WTC11 (cell line): ENCODE measurements at regions of chr16 and their contacts with region 1.

Region 1: DNA sequence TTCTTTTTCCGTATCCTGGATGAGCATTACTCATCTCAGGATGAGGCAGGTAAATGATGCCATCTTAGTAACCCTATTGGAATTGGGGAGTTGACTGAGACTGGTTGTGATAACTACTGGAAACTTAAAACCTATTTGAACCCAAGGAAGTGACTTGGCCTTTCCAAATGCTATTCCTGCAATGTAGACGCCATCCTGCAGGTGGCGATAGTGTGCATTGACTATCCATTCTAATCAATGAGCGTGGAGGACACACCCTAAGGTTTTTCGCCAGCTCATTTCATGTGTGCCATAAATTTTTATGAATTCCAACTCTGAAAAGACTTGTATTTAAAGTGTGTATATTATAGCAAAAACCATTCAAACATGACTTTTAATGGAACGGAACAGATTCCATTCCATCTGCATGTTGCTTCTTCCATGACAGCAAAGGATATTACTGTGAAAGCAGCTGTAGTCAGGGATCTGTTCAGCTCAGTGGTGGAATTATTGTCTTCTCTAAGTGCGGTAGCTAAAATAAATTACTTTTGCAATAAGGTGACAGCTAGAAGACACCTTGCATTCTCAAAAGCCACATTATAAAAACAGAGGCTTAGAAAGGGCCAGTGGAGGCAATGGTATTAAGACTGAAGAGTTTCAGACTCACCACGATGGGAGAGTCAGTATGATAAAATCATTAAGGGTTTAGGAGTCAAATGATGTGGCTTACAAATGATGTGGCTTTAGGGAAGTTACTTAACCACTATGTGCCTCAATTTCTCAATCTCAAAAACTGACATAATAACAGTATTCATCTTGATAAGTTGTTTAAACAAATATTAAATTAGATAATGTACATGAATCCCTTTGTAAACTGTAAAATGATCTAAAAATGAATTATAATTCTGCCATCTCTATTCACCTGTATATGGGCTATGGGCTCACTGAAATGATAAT is 55.5 kb downstream of the SYT17 start:
- DNase-seq: peak; percentile 86
- ATAC-seq: peak; percentile 65
- H3K4me3 Mint-ChIP-seq: no peak overlapping the region
- H3K27ac Mint-ChIP-seq: no peak overlapping the region
- H3K4me1 Mint-ChIP-seq: peaks cover 9% of the 10 kb centered on the region
- H3K27me3 Mint-ChIP-seq: no peaks in the 10 kb centered on the region; the same call in 1 of the 2 replicates
- CTCF ChIP-seq: peak; percentile 75

Region 2: GRCh38 chr16:18932243-18932981 is 291.1 kb before region 1 on chr16:
- CTCF ChIA-PET with region 1: no interaction called
- POLR2A ChIA-PET with region 1: no interaction called
- DNase-seq: no peak
- ATAC-seq: no peak
- H3K4me3 Mint-ChIP-seq: no peak overlapping the region
- H3K27ac Mint-ChIP-seq: no peak overlapping the region
- H3K4me1 Mint-ChIP-seq: peaks cover 19% of the 10 kb centered on the region; the same call in 1 of the 2 replicates
- H3K27me3 Mint-ChIP-seq: no peaks in the 10 kb centered on the region; the same call in 1 of the 2 replicates
- CTCF ChIP-seq: no peak

Region 3: DNA sequence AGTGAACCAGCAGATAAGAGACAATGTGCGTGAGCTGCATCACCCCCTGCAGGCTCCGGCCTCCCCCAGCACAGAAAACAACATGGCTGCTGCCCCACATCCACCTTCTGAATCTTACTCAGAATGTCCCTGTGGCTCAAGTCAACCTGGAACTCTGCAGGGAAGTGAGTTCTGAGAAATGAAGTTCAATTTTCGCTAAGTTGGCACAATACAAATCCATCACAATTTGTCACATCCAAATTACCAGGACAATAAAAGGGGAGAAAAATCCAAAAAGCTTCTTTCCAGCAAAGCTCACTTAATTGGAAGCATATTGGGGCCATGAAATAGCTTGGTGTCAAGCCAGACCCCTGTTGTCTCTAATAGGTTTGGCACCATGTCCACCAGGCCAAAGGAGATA is 100.1 kb after region 1 on chr16:
- CTCF ChIA-PET with region 1: no interaction called
- POLR2A ChIA-PET with region 1: no interaction called
- DNase-seq: no peak
- ATAC-seq: no peak
- H3K4me3 Mint-ChIP-seq: no peak overlapping the region
- H3K27ac Mint-ChIP-seq: no peak overlapping the region
- H3K4me1 Mint-ChIP-seq: peaks cover 3% of the 10 kb centered on the region
- H3K27me3 Mint-ChIP-seq: no peaks in the 10 kb centered on the region
- CTCF ChIP-seq: no peak

Region 4: GRCh38 chr16:19375561-19376158 is 152.2 kb after region 1 on chr16:
- CTCF ChIA-PET with region 1: interaction called, 13 read pairs
- POLR2A ChIA-PET with region 1: no interaction called
- DNase-seq: peak; percentile 59
- ATAC-seq: peak; percentile 61
- H3K4me3 Mint-ChIP-seq: no peak overlapping the region
- H3K27ac Mint-ChIP-seq: no peak overlapping the region
- H3K4me1 Mint-ChIP-seq: no peaks in the 10 kb centered on the region
- H3K27me3 Mint-ChIP-seq: no peaks in the 10 kb centered on the region
- CTCF ChIP-seq: peak; percentile 82